Posterior vena cava (tissue), 2 donors: ENCODE measurements at regions of chr5 and their contacts with region 1.

Region 1: GRCh38 chr5:40202814-40203440 is 476.8 kb upstream of the PTGER4 start:
- DNase-seq: no peak

Region 2: DNA sequence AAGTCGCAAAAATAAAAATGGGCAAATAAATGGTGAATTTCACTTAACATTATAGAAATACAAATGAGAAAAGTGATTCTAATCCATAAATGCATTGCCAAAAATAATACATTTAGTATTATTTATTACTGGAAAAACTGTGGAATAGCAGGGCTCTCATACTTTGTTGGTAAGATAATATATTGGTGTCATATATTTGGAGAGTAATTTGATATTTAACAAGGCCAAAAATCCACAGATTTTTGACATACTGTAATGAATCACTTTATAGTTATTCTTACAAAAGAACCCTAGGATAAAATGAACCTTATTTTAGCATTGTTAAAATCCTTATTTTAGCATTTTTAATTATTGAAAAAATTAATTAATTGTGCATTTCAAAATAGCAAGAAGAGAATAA is 380.9 kb before region 1 on chr5:
- intact Hi-C with region 1: loop called in 1 of 2 experiments (anchors 5 kb)
- DNase-seq: no peak

Region 3: DNA sequence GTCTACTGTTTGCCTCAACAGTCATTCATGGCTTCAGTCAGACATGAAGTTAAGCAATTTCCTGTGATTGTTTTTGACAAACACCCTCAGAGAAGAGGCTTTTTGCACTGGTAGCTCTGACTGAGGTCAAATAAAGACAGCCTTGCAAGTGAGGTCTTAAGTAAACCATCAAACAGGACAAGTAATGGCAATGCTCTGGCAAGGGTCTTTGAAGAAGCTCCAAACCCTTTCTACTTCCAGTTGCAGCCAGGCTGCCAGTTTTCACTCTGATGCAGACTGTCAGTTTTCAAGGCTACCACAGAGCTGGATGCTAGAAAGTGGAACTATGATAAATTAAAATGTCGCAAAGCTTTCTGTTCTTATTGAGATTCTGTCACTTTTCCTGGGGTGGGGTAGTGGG is 55.3 kb after region 1 on chr5:
- intact Hi-C with region 1: no loop called
- DNase-seq: no peak